ENCODE measurements at regions of chr17 and their contacts with region 1.

Region 1: DNA sequence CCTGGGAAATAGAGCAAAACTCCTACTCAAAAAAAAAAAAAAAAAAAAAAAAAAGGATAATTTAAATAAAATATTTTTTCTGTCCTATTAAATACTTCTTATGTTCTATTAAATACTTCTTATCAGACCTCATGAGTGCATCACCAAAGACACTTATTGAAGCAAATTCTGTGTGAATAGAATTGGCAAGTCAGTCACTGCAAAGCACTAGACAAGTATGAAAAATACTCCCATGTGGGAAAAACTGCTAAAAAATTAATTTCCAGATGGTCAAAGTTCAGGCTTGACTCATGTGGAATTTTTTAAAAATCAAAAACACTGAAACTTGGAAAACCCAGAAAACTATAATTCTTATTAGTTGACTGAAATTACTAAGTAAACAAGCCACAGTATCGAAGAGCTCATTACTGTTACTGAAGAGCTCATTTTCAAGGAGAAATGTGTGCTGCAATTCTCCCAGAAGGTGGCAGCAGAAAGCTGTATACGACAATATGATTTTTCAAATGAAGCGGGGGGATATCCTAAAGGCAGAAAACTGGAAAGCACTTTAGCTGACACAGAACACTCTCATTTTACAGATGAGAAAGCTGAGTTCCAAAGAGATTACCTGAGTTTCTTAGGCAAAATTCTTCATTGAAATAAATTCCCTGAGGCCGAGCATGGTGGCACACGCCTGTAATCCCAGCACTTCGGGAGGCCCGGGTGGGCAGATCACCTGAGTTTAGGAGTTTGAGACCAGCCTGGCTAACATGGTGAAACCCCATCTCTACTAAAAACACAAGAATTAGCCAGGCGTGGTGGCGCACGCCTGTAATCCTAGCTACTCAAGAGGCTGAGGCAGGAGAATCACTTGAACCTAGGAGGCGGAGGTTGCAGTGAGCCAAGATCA is 15.9 kb upstream of the FBXO47 start:
- DNase-seq: peak; percentile 31 to 38
- H3K4me3 ChIP-seq: no peak overlapping the region
- H3K27ac ChIP-seq: no peak overlapping the region
- H3K4me1 ChIP-seq: peaks cover 0 to 4% of the 10 kb centered on the region in 2 donors
- H3K27me3 ChIP-seq: no peaks in the 10 kb centered on the region
- CTCF ChIP-seq: peak; percentile 39 to 82 (median 74)
- POLR2A ChIP-seq: no peak

Region 2: DNA sequence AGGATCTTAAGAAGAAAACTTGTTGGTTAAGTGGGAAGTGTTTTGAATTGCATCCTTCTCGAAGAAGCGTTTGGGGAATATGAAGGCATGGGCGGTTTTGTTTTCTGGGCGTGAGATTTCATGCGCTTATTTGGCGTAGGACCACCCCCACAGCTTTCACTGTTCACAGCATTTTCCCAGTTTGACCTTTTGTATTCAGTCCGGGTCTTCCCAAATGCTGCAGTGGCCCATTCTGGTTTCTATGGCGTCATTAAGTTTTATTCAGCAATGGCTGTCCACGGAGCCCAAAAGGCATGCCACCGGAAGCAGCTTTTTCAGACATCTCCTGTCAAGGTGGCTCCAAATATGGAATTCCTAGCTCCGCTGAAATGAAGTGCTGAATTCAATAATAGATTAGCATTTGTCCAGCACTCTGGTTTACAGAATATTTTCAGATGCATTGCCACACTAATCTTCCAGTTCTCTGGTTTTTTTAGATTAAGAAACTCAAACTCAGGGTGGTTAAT is 74.7 kb after region 1 on chr17:
- intact Hi-C with region 1: loop called (anchors 10 kb)
- DNase-seq: no peak
- H3K4me3 ChIP-seq: no peak overlapping the region
- H3K27ac ChIP-seq: no peak overlapping the region
- H3K4me1 ChIP-seq: no peaks in the 10 kb centered on the region
- H3K27me3 ChIP-seq: no peaks in the 10 kb centered on the region
- CTCF ChIP-seq: no peak
- POLR2A ChIP-seq: no peak

Region 3: DNA sequence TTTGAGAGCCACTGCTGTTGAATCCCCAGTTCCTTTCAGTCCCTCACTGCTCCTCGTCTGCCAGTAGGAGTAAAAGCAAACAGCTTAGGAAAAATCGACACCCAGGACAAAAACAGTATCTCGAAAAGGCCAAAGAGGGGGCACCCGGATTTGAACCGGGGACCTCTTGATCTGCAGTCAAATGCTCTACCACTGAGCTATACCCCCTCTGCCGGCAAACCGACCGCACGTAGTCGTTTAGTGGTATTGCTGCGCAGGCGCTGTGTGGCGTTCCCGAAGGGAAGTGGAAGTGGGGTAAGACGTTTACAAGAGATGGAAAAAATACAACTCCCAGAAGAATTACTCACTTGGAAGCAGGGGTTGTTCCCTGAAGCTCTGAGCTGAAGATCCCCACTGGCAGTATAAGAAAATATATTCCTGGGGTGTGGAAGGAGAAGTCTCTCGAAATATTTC is 170.5 kb after region 1 on chr17:
- intact Hi-C with region 1: loop called (anchors 5 kb)
- DNase-seq: peak; percentile 91 to 93
- H3K4me3 ChIP-seq: peak overlapping the region; percentile 20 to 86 (median 69)
- H3K27ac ChIP-seq: peak overlapping the region; percentile 61 to 98 (median 96)
- H3K4me1 ChIP-seq: peaks cover 10 to 21% of the 10 kb centered on the region in 2 donors
- H3K27me3 ChIP-seq: no peaks in the 10 kb centered on the region
- CTCF ChIP-seq: peak in 3 of 6 experiments; percentile 24 to 42 (median 35)
- POLR2A ChIP-seq: peak in 1 of 2 donors; percentile 17

Region 4: GRCh38 chr17:39244600-39245570 is 261.8 kb after region 1 on chr17:
- intact Hi-C with region 1: loop called (anchors 10 kb)
- DNase-seq: peak; percentile 88 to 91
- H3K4me3 ChIP-seq: no peak overlapping the region
- H3K27ac ChIP-seq: no peak overlapping the region
- H3K4me1 ChIP-seq: peaks cover 0 to 6% of the 10 kb centered on the region in 2 donors
- H3K27me3 ChIP-seq: no peaks in the 10 kb centered on the region
- CTCF ChIP-seq: peak; percentile 89 to 94 (median 90)
- POLR2A ChIP-seq: no peak